ENCODE measurements at regions of chr19 and their contacts with region 1.

Region 1: DNA sequence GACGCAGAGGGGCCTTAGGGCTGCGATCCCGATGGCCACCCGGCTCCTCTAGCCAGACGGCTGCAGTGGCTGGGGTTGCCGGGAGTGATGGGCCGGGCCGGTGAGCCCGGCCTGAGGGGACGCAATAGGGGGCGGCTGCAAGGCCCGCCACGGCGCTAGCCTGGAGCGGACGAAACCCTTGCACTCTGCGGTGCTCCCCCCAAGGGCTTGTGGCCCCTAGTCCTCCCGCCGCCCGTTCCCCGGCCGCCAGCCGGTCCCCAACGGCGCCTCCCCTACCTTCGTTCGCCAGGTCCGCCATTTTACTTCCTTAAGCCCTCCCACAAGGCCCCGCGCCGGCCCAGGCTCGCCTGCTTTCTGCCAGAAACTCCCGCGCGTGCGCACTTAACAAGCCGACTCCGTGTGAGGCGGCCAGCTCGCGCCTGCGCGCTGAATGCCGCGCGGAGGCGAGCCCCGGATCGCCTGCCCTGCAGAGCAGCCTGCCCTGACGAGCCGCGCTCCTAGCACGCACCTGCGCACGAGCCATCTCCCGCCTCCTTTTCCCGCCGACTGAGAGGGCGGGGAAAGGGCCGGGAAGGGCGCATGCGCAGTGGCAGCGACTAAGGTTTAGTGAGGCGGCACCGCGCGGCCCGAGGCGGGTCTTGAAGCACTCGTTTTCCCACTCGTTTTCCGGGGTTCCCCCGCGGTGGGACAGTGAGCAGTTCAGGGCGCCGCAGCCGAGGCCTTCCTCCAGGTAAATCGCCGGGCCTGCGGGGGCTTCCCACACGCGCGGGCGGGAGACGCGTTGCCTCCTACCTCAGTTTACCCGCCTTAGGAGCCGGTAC is at the start of gene RANBP3:
- DNase-seq: peak; percentile 99
- ATAC-seq: peak; percentile 91
- H3K4me3 Mint-ChIP-seq: peak within 1 kb of the TSS; percentile 95
- H3K27ac Mint-ChIP-seq: peak within 1 kb of the TSS; percentile 92
- H3K4me1 Mint-ChIP-seq: peaks cover 53% of the 10 kb centered on the region
- H3K27me3 Mint-ChIP-seq: no peaks in the 10 kb centered on the region
- CTCF ChIP-seq: no peak
- total RNA-seq, gene RANBP3: 74.3 to 87.5 TPM

Region 2: DNA sequence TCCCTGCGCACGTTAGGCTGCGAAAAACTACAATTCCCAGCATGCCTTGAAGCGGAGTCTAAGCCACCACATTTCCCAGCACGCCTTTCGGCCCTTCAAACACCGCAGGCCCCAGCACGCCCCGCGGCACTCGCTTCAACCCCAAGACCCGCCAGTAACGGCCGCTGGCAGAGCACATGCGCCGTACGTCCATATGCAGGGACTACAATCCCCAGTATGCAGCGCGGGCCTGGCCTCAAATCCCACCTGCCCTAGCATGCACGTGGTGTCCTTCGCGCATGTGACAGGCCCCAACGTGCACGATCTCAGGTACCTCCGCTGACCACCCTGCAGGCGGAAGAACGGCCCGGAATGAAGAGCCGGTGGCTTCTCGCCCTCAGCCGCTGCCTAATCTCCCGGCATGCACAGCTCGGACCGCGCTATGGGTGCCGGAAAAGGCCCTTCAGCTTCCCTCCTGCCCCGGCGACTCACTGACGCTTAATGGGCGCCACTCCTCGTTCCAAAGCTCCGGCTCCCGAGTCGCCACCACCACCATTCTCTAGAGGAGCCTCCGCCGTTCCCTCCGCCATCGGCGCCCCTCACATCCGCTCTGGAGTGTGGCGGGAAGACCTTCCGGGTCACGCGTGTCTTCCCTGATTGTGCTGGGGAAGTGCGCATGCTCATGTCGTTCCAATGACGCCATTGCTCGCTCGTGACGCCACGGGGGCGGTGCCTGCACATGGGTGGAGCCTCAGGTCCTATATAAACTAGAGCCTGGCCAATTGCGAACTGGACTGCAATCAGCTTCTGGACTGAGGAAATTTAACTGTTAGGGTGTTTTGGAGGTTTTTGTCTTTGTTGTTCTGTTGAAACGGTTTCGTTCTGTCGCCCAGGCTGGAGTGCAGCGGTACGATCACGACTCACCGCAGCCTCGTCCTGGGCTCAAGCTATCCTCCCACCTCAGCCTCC is 187.1 kb before region 1 on chr19 and contains the start of gene DUS3L:
- CTCF ChIA-PET with region 1: no interaction called
- POLR2A ChIA-PET with region 1: no interaction called
- intact Hi-C with region 1: loop called (anchors 5 kb)
- DNase-seq: peak; percentile 99
- ATAC-seq: peak; percentile 96
- H3K4me3 Mint-ChIP-seq: peak within 1 kb of the TSS; percentile 100
- H3K27ac Mint-ChIP-seq: peak within 1 kb of the TSS; percentile 100
- H3K4me1 Mint-ChIP-seq: peaks cover 17% of the 10 kb centered on the region
- H3K27me3 Mint-ChIP-seq: no peaks in the 10 kb centered on the region
- CTCF ChIP-seq: no peak
- total RNA-seq, gene DUS3L: 69.6 to 74.5 TPM

Region 3: DNA sequence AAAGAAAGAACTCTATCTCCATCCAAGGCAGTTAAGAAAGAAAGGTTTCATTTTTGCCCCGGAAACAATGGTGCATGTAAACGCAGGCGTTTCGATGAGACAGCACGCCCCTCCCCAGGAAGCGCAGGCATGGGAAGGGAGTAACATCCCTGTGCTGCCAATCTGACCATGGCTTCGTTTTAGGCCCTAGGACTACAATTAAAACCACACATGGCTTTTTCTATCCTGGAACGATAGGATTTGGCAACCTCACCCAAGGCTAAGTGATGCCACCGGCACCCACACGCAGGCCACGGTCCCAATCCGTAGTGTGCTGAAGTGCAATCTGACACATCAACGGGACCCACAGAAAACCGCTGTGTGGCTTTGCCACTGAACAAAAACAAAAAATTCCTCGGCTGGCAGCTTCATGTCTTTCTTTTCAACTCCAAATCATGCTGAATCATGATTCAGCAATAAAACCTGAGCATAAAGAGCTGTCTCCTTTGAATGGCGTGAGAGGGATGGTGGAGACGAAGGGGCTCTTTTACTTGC is 24.2 kb before region 1 on chr19:
- CTCF ChIA-PET with region 1: interaction called, 108 read pairs
- POLR2A ChIA-PET with region 1: interaction called, 11 read pairs
- intact Hi-C with region 1: no loop called
- DNase-seq: peak; percentile 64
- ATAC-seq: peak; percentile 23
- H3K4me3 Mint-ChIP-seq: peak overlapping the region; percentile 41
- H3K27ac Mint-ChIP-seq: peak overlapping the region; percentile 96
- H3K4me1 Mint-ChIP-seq: peaks cover 91% of the 10 kb centered on the region
- H3K27me3 Mint-ChIP-seq: no peaks in the 10 kb centered on the region
- CTCF ChIP-seq: no peak

Region 4: GRCh38 chr19:6092329-6093286 is 114.6 kb after region 1 on chr19:
- CTCF ChIA-PET with region 1: no interaction called
- POLR2A ChIA-PET with region 1: no interaction called
- intact Hi-C with region 1: no loop called
- DNase-seq: no peak
- ATAC-seq: no peak
- H3K4me3 Mint-ChIP-seq: no peak overlapping the region
- H3K27ac Mint-ChIP-seq: no peak overlapping the region
- H3K4me1 Mint-ChIP-seq: peaks cover 7% of the 10 kb centered on the region
- H3K27me3 Mint-ChIP-seq: no peaks in the 10 kb centered on the region
- CTCF ChIP-seq: no peak

Measured in activated CD8-positive, alpha-beta T cell treated with anti-CD3 and anti-CD28 coated beads for 36 hours (primary cell).